ENCODE measurements at regions of chr2 and their contacts with region 1.

Region 1: DNA sequence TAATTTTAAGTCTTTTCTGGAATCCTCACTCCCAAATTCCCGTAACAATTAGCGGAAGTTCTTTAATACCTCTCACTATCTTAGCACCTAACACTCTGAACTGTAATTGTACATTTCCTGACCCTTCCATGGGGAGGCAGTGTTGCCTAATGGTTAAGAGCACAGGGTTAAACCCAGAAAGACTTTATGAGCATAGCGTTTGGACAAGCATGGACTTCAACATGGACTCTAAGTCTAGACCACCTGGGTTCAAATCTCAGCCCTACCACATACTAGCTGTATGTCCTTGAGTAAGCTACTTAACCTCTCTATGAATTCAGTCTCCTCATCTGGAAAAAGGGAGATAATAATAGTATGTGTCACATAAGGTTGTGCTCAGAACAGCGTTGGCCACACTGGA is 13.0 kb downstream of the ANTXR1 start:
- DNase-seq: peak; percentile 69

Region 2: DNA sequence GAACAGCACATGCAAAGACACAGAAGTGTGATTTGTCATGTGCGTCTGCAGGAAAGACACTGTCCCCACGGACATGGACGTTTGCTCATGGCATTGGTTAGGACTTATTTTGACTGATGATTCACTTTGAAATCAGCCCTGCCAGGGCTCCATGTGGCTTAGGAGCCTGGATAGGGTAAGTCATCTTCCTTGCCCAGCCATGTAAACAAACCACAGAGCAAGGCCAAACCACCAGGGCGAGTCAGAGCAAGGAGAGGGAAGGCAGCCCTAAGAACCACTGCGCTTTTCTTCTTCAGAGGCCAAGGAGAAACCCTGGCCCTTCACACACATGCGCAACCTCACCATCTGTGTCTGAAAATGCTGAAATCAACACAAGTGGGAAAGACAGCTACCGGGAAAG is 272.2 kb after region 1 on chr2:
- in situ Hi-C with region 1: loop called (anchors 25 kb)
- DNase-seq: no peak

Region 3: DNA sequence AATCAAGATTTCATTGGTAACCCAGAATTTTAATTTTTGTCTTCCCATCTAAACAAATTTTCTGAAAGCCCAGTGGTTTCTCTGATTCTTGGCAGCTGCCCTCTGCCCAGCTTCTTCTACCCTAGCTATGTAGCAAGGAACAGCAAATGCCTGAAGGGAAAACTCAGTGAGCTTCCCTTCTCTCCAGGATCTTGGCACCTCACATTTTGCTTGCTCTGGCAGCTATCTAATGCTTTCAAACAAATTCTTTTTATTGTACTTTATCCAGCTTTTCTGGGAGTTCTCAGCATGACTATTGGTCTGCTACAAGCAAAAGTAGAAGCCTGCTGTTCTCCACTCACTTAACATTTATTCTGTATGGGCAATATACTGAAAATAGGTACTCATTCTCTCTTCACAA is 379.3 kb after region 1 on chr2:
- in situ Hi-C with region 1: no loop called
- DNase-seq: no peak